Posterior vena cava (tissue), 2 donors: ENCODE measurements at regions of chr9 and their contacts with region 1.

Region 1: GRCh38 chr9:35277628-35278359 is 116.0 kb downstream of the UNC13B start:
- DNase-seq: no peak

Region 2: DNA sequence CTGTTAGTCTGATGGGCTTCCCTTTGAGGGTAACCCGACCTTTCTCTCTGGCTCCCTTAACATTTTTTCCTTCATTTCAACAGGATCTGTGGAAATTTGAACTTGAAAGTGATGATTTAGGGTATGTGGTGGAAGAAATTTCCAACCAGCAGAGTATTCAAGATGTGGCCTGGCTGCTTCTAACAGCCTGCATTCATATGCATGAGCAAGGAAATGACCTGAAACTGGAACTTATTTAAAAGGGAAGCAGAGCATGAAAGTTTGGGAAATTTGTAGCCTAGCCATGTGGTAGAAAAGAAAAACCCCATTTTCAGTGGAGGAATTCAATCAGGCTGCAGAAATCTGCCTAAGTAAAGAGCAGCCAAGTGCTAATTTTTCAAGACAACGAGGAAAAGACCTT is 74.3 kb before region 1 on chr9:
- intact Hi-C with region 1: no loop called
- DNase-seq: no peak

Region 3: GRCh38 chr9:35470894-35471293 is 193.1 kb after region 1 on chr9:
- intact Hi-C with region 1: loop called in 1 of 2 experiments (anchors 10 kb)
- DNase-seq: no peak